ENCODE measurements at regions of chr18 and their contacts with region 1.

Region 1: DNA sequence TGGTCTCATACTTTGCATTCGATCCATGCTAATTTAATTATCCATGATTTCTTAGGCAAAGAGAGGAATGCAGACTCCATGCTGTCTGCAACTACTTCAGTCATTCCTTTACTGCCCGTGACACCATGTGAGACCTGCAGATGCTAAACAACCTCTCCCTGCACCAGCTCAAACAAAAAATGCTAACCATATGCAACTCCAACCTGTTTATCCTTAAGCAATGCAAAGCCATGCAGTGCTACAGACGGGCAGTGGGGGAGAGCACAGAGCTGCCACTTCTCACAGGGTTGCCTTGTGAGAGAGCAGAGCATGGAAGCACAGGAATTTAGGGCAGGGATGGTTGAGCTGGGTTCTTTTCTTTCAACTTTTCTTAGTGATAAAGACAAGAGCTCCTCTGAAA is 74.9 kb upstream of the KLHL14 start:
- DNase-seq: no peak
- ATAC-seq: no peak
- H3K4me3 ChIP-seq: no peak overlapping the region
- H3K27ac ChIP-seq: no peak overlapping the region
- H3K4me1 ChIP-seq: no peaks in the 10 kb centered on the region
- H3K27me3 ChIP-seq: no peaks in the 10 kb centered on the region
- CTCF ChIP-seq: no peak
- POLR2A ChIP-seq: no peak

Region 2: DNA sequence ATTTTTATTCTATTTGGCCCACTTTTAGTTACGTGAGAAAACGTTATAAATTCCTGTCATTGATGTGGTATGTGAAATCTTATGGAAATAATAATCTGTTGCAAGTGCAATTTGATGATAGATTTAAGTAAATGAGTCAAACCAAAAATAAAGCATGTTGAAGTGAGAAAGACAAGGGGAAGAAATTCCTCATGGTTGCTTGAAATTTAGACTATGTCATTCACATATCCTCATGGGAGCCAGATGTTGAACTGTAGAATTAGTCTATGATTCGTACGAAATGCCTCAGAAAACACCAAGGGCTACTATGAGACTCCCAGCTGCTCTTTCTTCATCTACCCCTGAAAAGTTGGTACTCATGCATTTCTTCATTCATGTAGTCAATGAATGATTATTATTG is 130.6 kb before region 1 on chr18:
- in situ Hi-C with region 1: no loop called
- intact Hi-C with region 1: no loop called
- DNase-seq: no peak
- ATAC-seq: no peak
- H3K4me3 ChIP-seq: no peak overlapping the region
- H3K27ac ChIP-seq: no peak overlapping the region
- H3K4me1 ChIP-seq: no peaks in the 10 kb centered on the region
- H3K27me3 ChIP-seq: no peaks in the 10 kb centered on the region
- CTCF ChIP-seq: no peak
- POLR2A ChIP-seq: no peak

Region 3: DNA sequence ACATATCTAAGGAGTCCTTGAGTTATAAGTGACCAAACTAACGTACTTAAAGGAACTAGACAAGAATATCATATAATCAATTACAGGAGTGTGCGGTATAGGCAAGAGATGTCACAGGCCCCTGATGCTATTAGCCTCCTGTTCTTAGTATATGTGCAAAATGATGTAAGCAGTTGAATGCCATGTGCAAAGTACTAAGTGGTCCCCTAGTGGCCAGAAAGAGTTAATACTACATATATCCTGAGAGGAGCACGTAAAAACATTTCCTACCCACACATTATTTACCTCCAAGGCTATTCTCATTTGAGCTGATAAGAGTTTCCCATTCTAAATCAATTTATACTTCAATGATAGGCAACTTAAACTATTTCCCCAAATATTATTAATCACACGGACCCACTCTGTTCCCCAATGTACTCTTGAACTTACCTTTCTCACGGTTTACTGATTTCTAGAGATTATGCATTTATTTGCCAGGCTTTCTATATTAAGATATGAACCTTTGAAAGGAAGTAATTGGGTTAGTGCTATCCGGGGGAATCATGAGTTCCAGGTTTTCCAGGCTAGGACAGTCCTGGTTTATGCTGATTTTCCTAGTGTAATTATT is 83.1 kb after region 1 on chr18:
- in situ Hi-C with region 1: loop called in 1 of 4 experiments (anchors 25 kb)
- intact Hi-C with region 1: no loop called
- DNase-seq: no peak
- ATAC-seq: no peak
- H3K4me3 ChIP-seq: no peak overlapping the region
- H3K27ac ChIP-seq: no peak overlapping the region
- H3K4me1 ChIP-seq: no peaks in the 10 kb centered on the region
- H3K27me3 ChIP-seq: no peaks in the 10 kb centered on the region
- CTCF ChIP-seq: peak in 1 of 5 experiments; percentile 20
- POLR2A ChIP-seq: no peak

Measured in gastrocnemius medialis (tissue), 4 donors.